Mammary epithelial cell (primary cell): ENCODE measurements at regions of chr11 and their contacts with region 1.

Region 1: DNA sequence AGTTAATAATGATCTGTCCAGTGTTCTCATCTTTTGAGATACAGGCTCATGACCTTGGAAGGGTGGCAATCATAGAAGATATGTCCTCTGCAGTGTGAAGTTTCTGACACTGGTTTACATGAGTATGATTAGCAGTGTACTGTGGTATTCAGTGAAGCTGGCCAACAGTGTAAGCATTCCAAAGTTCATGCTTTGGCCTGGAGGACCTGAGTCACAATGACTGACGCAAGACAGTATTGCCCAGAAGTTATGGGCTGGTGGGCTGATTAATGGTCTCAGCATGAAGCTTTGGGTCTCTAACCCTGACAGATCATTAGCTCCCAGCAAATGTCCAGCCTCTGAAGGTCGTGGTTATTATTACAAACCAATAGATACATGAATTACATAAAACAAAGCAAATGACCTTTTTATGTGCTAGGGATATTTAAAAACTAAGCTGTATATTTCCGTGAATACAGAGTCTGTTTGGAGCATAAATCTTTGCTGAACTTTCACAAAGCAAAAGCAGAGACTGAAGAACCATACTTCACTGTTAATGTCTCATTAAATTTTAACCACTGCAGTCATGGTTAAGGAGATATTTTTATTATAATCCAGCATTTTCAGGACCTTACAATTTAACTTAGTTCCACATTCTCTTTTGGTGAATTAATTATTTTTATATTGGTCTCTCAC is 28.3 kb upstream of the USP47 start:
- DNase-seq: peak; percentile 77
- H3K4me3 ChIP-seq: no peak overlapping the region
- H3K27ac ChIP-seq: no peak overlapping the region
- H3K4me1 ChIP-seq: no peaks in the 10 kb centered on the region
- H3K27me3 ChIP-seq: no peaks in the 10 kb centered on the region
- CTCF ChIP-seq: no peak

Region 2: GRCh38 chr11:11848891-11849746 is 35.7 kb after region 1 on chr11:
- CTCF ChIA-PET with region 1: no interaction called
- dilution Hi-C with region 1: no loop called
- in situ Hi-C with region 1: no loop called
- intact Hi-C with region 1: loop called (anchors 2 kb)
- DNase-seq: peak; percentile 62
- H3K4me3 ChIP-seq: peak overlapping the region in 1 of 3 experiments; percentile 9
- H3K27ac ChIP-seq: peak overlapping the region; percentile 23
- H3K4me1 ChIP-seq: peaks cover 26% of the 10 kb centered on the region
- H3K27me3 ChIP-seq: no peaks in the 10 kb centered on the region
- CTCF ChIP-seq: peak; percentile 87 to 92

Region 3: GRCh38 chr11:12043959-12044819 is 230.8 kb after region 1 on chr11:
- CTCF ChIA-PET with region 1: no interaction called
- dilution Hi-C with region 1: no loop called
- in situ Hi-C with region 1: no loop called
- intact Hi-C with region 1: no loop called
- DNase-seq: peak; percentile 94
- H3K4me3 ChIP-seq: no peak overlapping the region
- H3K27ac ChIP-seq: peak overlapping the region; percentile 69
- H3K4me1 ChIP-seq: peaks cover 41% of the 10 kb centered on the region
- H3K27me3 ChIP-seq: no peaks in the 10 kb centered on the region
- CTCF ChIP-seq: peak; percentile 78 to 91